Left cardiac atrium (tissue), 4 donors: ENCODE measurements at regions of chr12 and their contacts with region 1.

Region 1: DNA sequence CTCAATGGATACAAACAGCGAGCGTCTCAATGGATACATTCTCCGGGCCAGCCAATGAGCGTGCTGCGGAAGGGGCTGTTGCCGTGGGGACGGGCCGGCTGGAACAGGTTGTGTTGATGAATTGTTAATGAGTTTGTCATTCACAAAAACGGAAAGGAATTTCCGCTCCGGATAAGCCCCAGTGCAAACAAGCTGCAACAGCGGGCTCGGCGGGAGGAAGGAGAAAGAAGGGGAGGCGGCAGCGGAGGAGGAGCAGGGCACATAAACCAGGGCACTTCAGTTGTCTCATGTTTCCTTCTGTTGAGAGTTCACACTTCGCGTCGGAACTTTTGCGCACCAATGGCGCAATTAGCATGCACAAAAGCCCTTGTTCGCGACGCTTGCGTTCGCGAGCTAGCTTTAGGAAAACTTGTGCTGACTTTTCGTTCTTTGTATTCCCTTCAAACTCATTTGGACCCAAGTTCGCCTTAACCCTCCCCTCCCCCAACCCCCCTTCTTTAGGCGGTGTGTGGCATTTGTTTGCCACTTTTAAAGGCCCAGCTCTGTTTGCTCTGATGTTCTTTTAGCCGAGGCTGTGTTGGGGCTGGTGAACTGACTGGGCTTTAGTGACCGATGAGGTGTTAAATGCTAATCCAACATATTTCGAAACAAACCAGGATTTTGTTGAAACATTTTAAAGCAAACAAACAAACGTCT is at the start of gene DUSP6:
- DNase-seq: peak; percentile 96
- ATAC-seq: peak; percentile 72 to 81
- total RNA-seq, gene DUSP6: 47.8 to 53.2 TPM

Region 2: GRCh38 chr12:89051065-89051677 is 301.5 kb before region 1 on chr12:
- intact Hi-C with region 1: loop called (anchors 2 to 5 kb)
- DNase-seq: no peak
- ATAC-seq: peak; percentile 81 to 90

Region 3: DNA sequence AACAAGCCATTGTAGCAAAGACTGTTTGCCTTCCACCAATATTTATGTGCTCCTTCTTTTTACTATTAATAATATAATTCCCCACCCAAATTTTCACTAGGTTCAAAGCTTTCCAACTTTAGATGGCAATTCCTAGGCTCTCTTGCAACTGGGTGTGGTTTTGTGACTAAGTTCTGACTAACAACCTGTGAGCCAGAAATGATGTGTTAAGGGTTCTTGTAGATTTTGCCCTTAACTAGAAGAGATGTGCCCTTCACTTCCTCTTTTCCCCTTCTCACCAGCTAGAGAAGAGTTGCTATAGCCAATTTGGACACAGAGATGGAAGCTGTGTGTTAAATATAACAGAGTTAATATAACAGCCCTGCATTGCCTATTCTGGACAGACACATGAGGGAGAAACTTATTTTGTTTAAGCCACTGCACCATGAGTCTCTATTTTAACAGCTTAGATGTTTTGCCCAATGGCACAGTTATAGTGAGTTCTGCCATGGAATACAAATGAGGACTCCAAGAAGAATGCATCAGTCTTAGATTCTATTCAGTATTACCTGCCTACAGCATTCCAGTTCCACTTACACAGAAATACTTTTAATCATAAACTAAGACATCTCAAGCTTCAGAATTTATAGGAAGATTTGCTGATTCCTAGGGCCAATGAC is 216.5 kb before region 1 on chr12:
- intact Hi-C with region 1: loop called in 1 of 2 experiments (anchors 5 kb)
- DNase-seq: no peak
- ATAC-seq: peak in 1 of 2 donors; percentile 36

Region 4: DNA sequence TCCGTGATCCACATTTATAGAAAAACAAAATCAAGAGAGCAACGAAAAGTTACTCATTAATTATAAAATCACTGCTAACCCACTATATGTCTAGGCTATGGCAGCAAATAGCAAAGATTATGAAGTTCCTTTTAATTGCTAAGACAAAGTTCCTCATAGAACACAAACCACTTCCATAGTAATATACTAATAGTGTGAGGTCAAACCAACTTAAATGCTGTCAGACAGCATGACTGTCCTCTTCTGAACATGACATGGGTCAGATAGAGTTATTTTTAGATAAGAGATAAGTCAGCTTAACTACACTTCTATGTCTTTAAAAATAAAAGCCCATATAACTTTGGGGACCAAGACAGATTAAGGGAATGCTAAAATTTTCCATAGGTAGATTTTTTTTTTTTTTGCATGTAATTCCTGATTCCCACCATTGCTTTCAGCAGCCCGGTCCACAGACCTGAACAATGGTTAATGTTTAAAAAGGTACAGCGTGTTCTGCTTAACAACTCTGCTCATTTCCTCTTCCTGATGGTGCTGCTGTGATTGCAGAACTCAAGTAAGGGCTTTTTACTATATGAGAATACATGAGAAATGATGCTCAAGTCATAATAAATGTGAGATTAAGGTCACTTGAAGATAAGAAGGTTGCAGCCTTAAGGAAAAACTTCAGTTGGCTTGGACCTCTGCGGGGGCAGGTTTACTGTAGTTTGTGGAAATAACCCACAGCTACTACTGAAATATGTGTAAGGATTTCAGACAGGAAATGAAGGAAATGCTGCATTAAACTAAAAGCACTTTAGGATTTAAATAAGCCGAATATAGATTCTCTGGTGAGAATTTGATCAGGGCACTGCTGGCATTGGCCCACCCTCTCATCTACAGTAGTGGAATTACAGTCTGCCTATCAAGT is 37.4 kb after region 1 on chr12:
- intact Hi-C with region 1: loop called in 1 of 2 experiments (anchors 5 kb)
- DNase-seq: no peak
- ATAC-seq: peak; percentile 62 to 76

Region 5: GRCh38 chr12:89451841-89452251 is 99.2 kb after region 1 on chr12:
- intact Hi-C with region 1: loop called in 1 of 2 experiments (anchors 2 kb)
- DNase-seq: peak; percentile 42
- ATAC-seq: peak; percentile 73 to 76

Region 6: GRCh38 chr12:89461649-89462612 is 109.3 kb after region 1 on chr12:
- intact Hi-C with region 1: loop called in 1 of 2 experiments (anchors 5 kb)
- DNase-seq: no peak
- ATAC-seq: peak; percentile 90 to 93